Activated naive CD4-positive, alpha-beta T cell treated with anti-CD3 and anti-CD28 coated beads for 36 hours (primary cell): ENCODE measurements at regions of chr2 and their contacts with region 1.

Region 1: DNA sequence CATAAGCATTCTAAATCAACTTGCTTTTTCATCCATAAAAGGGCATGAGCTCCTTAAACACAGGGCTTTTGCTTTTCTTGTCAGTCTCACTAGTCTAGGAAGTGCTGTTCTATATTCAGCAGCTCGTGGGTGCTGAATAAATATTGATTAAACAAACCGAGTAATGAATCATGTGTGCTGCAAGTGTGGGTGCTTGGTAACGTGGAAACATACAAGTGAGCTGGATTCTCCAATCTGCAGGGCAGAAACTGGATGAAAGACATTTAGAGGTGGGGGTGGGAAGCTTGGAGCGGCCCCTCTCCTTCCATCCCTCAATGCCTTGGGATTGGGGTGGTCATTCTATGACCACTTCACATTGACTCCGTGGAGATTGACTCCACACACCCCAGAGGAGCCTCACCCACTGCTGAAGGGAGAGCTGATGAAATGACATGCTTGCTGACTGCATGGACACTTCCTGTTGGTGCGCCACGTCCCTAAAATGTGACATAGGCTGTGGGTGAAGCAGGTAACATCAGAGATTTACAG is 114.6 kb downstream of the DOCK10 start:
- DNase-seq: peak; percentile 86
- H3K4me3 Mint-ChIP-seq: peak overlapping the region; percentile 58
- H3K27ac Mint-ChIP-seq: peak overlapping the region; percentile 98
- H3K4me1 Mint-ChIP-seq: peaks cover 97% of the 10 kb centered on the region
- H3K27me3 Mint-ChIP-seq: no peaks in the 10 kb centered on the region

Region 2: DNA sequence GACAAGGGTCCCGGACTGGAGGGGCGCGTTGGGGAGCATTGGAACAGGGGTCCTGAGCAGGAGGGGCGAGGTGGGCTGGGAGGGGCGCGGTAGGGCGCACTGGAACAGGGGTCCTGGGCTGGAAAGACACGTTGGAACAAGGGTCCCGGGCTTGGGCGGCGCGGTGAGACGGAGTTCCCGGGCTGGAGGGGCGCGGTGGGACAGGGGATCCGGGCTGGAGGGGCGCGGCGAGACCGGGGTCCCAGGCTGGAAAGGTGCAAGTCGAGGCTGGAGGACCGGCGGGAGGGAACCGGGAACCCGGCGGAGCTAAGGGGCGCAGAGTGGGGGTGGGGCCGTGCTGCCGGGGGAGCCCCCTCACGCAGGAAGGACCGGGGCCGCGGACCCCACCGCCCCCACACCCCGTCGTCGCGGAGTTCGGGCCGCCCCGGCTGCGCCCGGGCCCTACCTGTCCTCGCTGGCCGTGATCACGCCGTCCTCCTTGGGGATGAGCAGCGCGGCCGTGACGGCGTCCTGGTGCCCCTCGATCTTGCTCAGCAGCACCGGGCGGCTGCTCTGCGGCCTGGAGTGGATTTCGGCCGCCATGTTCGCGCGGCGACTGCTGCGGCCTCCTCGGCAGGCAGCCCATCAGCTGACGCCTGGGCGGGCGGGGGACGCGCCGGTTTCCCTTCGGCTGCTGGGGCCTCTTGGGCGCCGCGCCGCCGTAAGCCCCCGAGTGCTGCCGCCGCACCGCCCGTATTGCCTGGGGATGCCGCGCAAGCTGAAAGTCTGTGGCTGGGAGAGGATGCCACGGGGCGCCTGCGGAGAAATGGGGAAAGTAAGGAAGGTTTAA is 982.8 kb before region 1 on chr2 and contains the start of gene WDFY1:
- CTCF ChIA-PET with region 1: no interaction called
- intact Hi-C with region 1: loop called (anchors 5 kb)
- DNase-seq: peak; percentile 82
- H3K4me3 Mint-ChIP-seq: peak within 1 kb of the TSS; percentile 92
- H3K27ac Mint-ChIP-seq: peak within 1 kb of the TSS; percentile 86
- H3K4me1 Mint-ChIP-seq: peaks cover 58% of the 10 kb centered on the region
- H3K27me3 Mint-ChIP-seq: no peaks in the 10 kb centered on the region
- total RNA-seq, gene WDFY1: 39.4 to 39.9 TPM

Region 3: GRCh38 chr2:224520064-224520463 is 407.6 kb before region 1 on chr2:
- CTCF ChIA-PET with region 1: no interaction called
- intact Hi-C with region 1: loop called (anchors 5 kb)
- DNase-seq: peak; percentile 64
- H3K4me3 Mint-ChIP-seq: no peak overlapping the region
- H3K27ac Mint-ChIP-seq: peak overlapping the region; percentile 24
- H3K4me1 Mint-ChIP-seq: peaks cover 58% of the 10 kb centered on the region
- H3K27me3 Mint-ChIP-seq: no peaks in the 10 kb centered on the region

Region 4: DNA sequence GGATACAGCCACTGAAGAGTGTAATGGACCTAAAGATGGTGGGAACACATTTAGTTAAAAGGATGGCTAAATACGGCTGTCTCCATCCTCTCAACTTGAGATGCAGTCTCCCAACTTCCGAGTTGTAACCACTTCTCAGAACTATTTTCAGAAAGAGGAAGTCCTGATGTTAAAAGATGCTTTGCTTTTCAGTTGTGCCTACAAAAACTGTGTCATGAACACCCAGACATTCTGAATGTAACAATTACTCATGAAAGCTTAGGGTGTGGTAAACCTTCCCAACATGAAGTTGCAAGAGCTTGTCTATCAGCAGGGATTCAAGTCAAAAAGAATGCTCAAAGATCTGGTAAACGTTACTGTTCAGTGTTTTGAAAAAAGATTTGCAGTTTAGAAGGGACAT is 33.4 kb before region 1 on chr2:
- CTCF ChIA-PET with region 1: interaction called, 4 read pairs
- intact Hi-C with region 1: loop called (anchors 1 kb)
- DNase-seq: no peak
- H3K4me3 Mint-ChIP-seq: peak overlapping the region; percentile 50
- H3K27ac Mint-ChIP-seq: peak overlapping the region; percentile 90
- H3K4me1 Mint-ChIP-seq: peaks cover 69% of the 10 kb centered on the region
- H3K27me3 Mint-ChIP-seq: no peaks in the 10 kb centered on the region

Region 5: GRCh38 chr2:224957540-224958461 is 30.1 kb after region 1 on chr2:
- CTCF ChIA-PET with region 1: no interaction called
- intact Hi-C with region 1: no loop called
- DNase-seq: no peak
- H3K4me3 Mint-ChIP-seq: no peak overlapping the region
- H3K27ac Mint-ChIP-seq: peak overlapping the region; percentile 54
- H3K4me1 Mint-ChIP-seq: peaks cover 84% of the 10 kb centered on the region
- H3K27me3 Mint-ChIP-seq: no peaks in the 10 kb centered on the region

Region 6: DNA sequence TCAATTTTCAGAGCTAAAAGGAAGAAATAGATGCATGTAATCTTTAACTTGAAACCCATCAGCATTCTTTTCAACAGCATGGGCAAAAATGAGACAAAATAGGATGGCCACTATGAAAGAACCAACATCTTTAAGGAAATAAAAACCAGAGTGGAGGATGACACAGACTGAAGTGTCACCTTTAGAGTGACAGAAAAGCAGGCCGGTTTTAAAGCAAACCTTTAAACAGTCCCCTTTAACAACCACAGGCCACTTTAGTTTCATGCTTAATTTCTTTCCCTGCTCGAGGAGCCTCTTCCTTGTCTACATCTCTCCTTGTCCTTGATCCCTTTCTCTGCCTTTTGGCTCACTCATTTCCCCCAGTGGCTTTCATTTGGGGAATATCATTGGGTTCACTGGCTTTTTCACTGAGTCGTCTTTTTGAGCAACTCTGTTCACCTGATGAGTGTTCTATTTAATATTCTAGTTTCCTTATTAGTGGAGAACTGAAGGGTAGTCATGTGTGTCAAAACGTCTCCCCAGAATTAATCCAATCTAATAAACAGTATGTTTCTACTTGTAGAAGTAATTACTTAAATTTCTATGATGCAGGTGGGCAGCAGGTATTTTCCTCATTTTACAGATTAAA is 42.0 kb after region 1 on chr2:
- CTCF ChIA-PET with region 1: no interaction called
- intact Hi-C with region 1: loop called (anchors 1 kb)
- DNase-seq: no peak
- H3K4me3 Mint-ChIP-seq: no peak overlapping the region
- H3K27ac Mint-ChIP-seq: peak overlapping the region; percentile 79
- H3K4me1 Mint-ChIP-seq: peaks cover 65% of the 10 kb centered on the region
- H3K27me3 Mint-ChIP-seq: no peaks in the 10 kb centered on the region

Region 7: GRCh38 chr2:225041851-225042799 is 114.4 kb after region 1 on chr2 and contains the start of gene DOCK10:
- CTCF ChIA-PET with region 1: interaction called, 7 read pairs
- intact Hi-C with region 1: loop called (anchors 1 kb)
- DNase-seq: peak; percentile 60
- H3K4me3 Mint-ChIP-seq: peak within 1 kb of the TSS; percentile 85
- H3K27ac Mint-ChIP-seq: peak within 1 kb of the TSS; percentile 96
- H3K4me1 Mint-ChIP-seq: peaks cover 39% of the 10 kb centered on the region
- H3K27me3 Mint-ChIP-seq: no peaks in the 10 kb centered on the region
- total RNA-seq, gene DOCK10: 123 to 137 TPM

Region 8: DNA sequence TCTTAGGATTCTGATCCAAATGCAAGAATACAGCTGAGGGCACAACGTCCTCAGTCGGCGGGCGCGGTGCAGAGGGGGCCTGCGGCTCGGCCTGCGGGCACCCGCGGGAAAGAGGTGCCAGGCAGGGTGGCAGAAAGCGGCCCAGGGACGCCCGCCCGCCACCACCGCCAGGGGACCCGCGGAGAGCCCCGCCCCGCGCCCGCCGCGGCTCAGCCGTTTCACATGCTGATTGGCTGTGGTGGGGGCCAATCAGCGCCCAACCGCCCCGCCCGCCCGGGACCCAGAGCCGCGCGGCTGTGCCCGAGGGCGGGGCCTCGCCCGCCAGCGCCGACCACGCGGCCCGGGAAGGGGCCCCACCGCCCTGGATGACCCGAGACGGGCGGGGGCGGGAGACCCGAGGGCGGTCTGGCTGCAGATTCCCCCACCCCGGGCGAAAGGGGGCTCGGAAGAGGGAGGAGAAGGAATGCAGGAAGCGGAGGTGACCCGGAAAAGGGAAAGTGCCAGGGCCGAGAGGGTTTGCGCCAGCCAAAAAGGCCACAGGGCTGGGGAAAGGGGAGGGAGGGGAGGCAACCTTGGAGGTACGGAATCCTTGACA is 1863.9 kb after region 1 on chr2:
- CTCF ChIA-PET with region 1: no interaction called
- intact Hi-C with region 1: loop called (anchors 5 kb)
- DNase-seq: peak; percentile 90
- H3K4me3 Mint-ChIP-seq: peak overlapping the region; percentile 83
- H3K27ac Mint-ChIP-seq: peak overlapping the region; percentile 95
- H3K4me1 Mint-ChIP-seq: peaks cover 37% of the 10 kb centered on the region
- H3K27me3 Mint-ChIP-seq: no peaks in the 10 kb centered on the region